ENCODE measurements at regions of chr16 and their contacts with region 1.

Region 1: DNA sequence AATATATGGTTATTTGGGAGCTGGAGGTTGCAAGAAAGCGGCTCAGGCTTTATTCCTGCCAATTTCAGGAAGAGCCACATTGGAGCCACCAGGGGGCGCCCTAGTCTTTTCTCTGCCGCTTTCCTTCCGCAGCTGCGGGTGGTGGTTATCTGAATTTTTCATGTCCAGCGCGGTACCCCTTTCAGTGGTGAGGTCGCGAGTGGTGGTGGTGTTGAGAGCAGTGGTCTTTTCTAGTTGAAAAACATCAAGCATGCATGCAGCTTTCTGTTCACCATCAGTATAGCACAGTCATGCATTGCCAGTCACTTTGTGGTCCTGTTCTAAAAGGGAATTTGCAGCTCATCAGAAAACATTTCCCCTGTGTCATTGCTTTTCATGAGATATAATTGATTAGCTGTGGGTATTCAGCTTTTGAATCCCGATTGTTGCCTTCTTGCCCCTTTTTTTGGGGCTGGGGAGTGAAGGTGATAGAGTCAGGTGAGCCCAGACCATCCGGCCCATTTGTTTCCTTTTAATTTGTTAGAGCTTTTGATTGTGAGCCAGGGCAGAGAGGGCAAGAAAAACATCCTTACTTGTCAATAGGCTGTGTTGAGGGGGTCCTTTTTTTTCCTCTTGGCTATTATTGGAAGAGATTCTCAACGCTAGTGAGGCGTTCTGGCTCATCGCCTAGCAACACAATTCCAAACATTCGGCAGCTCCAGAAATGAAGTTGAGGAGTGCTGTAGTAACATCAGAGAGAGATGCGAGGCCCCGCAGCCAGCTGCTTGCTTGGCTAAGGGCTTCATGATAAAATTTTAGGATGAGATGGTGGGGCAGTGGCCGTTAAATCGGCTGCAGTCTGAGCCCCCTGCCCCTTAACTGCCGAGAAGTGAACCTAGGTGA is 119.0 kb downstream of the SNX29 start:
- DNase-seq: peak; percentile 30
- H3K4me3 ChIP-seq: no peak overlapping the region
- H3K27ac ChIP-seq: peak overlapping the region; percentile 39
- H3K27me3 ChIP-seq: no peaks in the 10 kb centered on the region
- CTCF ChIP-seq: peak; percentile 90

Region 2: DNA sequence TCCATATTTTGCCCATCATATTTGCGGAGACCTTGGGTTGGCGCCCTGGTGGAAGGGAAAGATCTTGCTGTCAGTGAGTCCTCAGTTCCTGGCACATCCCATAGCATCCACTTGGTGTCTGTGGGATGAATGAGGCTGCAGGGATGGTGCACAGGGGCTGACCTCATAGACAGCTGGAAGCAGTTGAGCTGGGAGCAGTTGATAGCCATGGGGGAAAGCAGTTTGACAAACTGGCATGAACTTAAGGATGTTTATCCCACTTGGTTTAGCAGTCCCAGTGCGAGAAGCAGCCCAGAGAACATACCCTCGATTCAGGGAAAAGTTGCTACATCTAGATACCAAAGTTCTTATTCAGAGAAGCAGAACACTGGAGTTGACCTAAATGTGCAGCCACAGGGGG is 38.2 kb before region 1 on chr16:
- CTCF ChIA-PET with region 1: interaction called, 12 read pairs
- POLR2A ChIA-PET with region 1: no interaction called
- DNase-seq: no peak
- H3K4me3 ChIP-seq: no peak overlapping the region
- H3K27ac ChIP-seq: peak overlapping the region; percentile 21
- H3K27me3 ChIP-seq: no peaks in the 10 kb centered on the region
- CTCF ChIP-seq: peak; percentile 8; the same call in 1 of the 2 replicates

Region 3: GRCh38 chr16:12152737-12153136 is 57.2 kb after region 1 on chr16:
- CTCF ChIA-PET with region 1: interaction called, 10 read pairs
- POLR2A ChIA-PET with region 1: no interaction called
- DNase-seq: no peak
- H3K4me3 ChIP-seq: no peak overlapping the region
- H3K27ac ChIP-seq: no peak overlapping the region
- H3K27me3 ChIP-seq: no peaks in the 10 kb centered on the region
- CTCF ChIP-seq: no peak

Region 4: GRCh38 chr16:12215277-12216105 is 120.0 kb after region 1 on chr16:
- CTCF ChIA-PET with region 1: interaction called, 21 read pairs
- POLR2A ChIA-PET with region 1: no interaction called
- DNase-seq: no peak
- H3K4me3 ChIP-seq: no peak overlapping the region
- H3K27ac ChIP-seq: no peak overlapping the region
- H3K27me3 ChIP-seq: no peaks in the 10 kb centered on the region
- CTCF ChIP-seq: peak; percentile 52

Region 5: DNA sequence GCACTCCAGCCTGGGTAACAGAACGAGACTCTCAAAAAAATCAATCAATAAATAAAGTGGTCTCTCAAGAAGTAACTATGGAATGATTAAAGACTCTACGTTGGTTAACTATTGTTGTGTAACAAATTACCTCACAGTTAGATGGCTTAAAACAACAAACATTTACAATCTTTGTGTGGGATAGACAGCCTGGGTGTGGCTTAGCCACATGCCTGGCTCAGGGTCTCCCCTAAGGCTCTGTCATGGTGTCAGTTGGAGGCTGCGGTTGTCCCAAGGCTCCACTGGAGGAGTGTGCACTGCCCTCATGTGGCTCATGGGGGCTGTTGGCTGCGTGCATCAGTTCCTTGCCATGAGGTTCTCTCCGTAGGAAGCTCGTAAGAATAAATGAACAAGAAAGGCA is 175.5 kb after region 1 on chr16:
- CTCF ChIA-PET with region 1: interaction called, 16 read pairs
- POLR2A ChIA-PET with region 1: no interaction called
- DNase-seq: no peak
- H3K4me3 ChIP-seq: no peak overlapping the region
- H3K27ac ChIP-seq: no peak overlapping the region
- H3K27me3 ChIP-seq: no peaks in the 10 kb centered on the region
- CTCF ChIP-seq: peak; percentile 50

Region 6: GRCh38 chr16:12406926-12407690 is 311.6 kb after region 1 on chr16:
- CTCF ChIA-PET with region 1: interaction called, 10 read pairs
- POLR2A ChIA-PET with region 1: interaction called, 3 read pairs
- DNase-seq: no peak
- H3K4me3 ChIP-seq: no peak overlapping the region
- H3K27ac ChIP-seq: no peak overlapping the region
- H3K27me3 ChIP-seq: no peaks in the 10 kb centered on the region
- CTCF ChIP-seq: no peak

Measured in AG04450 (cell line).